Mammary epithelial cell (primary cell): ENCODE measurements at regions of chr1 and their contacts with region 1.

Region 1: GRCh38 chr1:98104289-98104688 is 183.5 kb upstream of the DPYD start:
- DNase-seq: no peak
- H3K4me3 ChIP-seq: no peak overlapping the region
- H3K27ac ChIP-seq: no peak overlapping the region
- H3K4me1 ChIP-seq: no peaks in the 10 kb centered on the region
- H3K27me3 ChIP-seq: no peaks in the 10 kb centered on the region
- CTCF ChIP-seq: no peak

Region 2: DNA sequence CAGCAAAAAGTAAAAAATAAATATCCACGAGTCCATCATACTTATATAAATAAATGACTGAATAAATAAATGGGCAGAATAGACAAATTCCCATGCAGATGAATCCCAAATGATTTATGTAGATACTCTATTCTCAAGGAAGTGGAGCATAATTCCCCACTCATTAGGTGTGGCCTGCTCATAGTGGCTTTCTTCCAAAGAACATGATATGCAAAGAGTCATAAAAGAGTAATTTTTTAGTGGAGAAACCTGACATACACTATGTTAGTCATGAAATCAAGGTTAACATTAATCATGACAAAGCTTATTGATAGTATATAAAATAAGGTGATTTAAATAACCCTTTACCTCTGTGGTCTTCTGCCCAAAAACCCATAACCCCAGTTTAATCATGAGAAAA is 482.3 kb before region 1 on chr1:
- CTCF ChIA-PET with region 1: interaction called, 11 read pairs
- dilution Hi-C with region 1: no loop called
- in situ Hi-C with region 1: no loop called
- intact Hi-C with region 1: no loop called
- DNase-seq: peak; percentile 54
- H3K4me3 ChIP-seq: no peak overlapping the region
- H3K27ac ChIP-seq: no peak overlapping the region
- H3K4me1 ChIP-seq: no peaks in the 10 kb centered on the region
- H3K27me3 ChIP-seq: no peaks in the 10 kb centered on the region
- CTCF ChIP-seq: no peak

Region 3: GRCh38 chr1:97745912-97746311 is 358.4 kb before region 1 on chr1:
- CTCF ChIA-PET with region 1: no interaction called
- dilution Hi-C with region 1: no loop called
- in situ Hi-C with region 1: no loop called
- intact Hi-C with region 1: no loop called
- DNase-seq: peak; percentile 53
- H3K4me3 ChIP-seq: no peak overlapping the region
- H3K27ac ChIP-seq: no peak overlapping the region
- H3K4me1 ChIP-seq: no peaks in the 10 kb centered on the region
- H3K27me3 ChIP-seq: no peaks in the 10 kb centered on the region
- CTCF ChIP-seq: no peak